Cardiac septum (tissue), 1 donor: ENCODE measurements at regions of chr3 and their contacts with region 1.

Region 1: DNA sequence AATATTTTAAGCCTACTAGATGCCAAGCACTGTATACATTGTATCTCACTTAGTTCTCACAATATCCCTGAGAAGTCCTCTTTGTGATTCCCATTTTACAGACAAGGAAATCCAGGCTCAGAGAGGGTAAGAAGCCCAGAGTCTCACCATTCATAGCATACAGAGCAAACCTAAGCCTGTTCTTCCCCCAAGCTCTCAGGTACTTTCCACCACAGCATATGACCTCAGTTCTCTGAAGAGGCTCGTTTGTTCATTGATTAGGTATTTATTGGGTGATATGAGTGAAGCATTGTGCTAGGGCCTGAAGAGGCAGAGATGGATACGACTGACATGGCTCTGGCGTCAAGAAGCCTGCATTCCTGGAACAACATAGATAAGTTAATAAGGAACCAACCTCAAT is 310.9 kb upstream of the UMPS start:
- DNase-seq: no peak

Region 2: GRCh38 chr3:124363476-124363875 is 55.8 kb before region 1 on chr3:
- intact Hi-C with region 1: loop called (anchors 5 kb)
- DNase-seq: no peak

Region 3: DNA sequence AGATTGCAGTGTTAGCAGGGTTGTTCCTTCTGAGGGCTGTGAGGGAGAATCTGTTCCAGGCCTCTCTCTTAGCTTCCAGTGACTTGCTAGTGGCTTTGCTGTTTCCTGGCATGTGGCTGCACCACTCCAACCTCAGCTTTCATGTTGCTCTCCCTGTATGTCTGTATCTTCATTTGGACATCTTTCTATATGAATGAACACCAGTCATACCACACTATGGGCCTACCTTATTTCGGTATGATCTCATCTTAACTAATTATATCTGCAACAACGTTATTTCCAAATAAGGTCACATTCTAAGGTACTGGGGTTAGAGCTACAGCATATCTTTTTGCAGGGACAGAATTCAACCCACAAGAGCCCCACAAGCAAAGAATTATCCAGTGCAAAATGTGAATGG is 45.8 kb before region 1 on chr3:
- intact Hi-C with region 1: no loop called
- DNase-seq: no peak

Region 4: GRCh38 chr3:124730129-124730940 is 311.0 kb after region 1 on chr3 and contains the start of gene UMPS:
- intact Hi-C with region 1: no loop called
- DNase-seq: peak; percentile 95
- total RNA-seq, gene UMPS: 13.5 TPM